ENCODE measurements at regions of chr19 and their contacts with region 1.

Region 1: DNA sequence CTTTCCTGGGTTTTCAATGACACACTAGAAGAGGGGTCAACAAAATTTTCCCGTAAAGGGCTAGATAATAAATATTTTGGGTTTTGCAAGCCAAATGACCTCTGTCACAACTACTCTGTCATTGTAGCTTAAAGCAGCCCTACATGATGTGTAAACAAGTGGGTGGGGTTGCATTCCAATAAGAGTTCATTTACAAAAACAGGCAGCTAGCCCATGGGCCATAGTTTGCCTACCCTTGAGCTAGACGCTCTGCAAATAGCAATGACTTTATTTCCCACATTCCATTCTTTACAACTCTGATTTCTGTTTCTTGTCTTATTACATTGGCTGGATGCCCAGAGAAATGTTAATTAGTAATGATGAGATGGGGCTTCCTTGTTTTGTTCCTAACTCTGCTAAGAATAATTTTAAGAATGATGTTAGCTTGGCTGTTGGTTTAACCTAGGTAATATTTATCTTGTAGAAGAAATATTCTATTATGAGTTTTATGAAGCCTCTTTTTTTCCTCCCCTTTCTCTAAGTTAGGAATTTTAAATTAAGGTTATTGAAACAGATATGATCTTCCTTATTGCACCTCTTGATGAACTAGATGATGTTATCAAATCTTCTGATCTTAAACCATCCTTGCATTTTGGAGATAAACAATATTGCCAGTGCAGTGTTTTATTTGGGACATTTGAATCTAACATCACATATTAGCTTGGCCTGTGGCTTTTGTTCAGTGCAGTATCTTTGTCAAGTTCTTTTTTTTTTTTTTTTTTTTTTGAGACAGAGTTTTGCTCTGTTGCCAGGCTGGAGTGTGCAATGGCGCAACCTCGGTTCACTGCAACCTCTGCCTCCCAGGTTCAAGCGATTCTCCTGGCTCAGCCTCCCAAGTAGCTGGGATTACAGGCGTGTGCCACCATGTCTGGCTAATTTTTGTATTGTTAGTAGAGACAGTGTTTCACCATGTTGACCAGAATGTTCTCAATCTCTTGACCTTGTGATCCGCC is 76.3 kb downstream of the ZNF557 start:
- DNase-seq: no peak
- ATAC-seq: no peak
- H3K4me3 ChIP-seq: no peak overlapping the region
- H3K4me3 Mint-ChIP-seq: no peak overlapping the region
- H3K27ac ChIP-seq: no peak overlapping the region
- H3K27ac Mint-ChIP-seq: no peak overlapping the region
- H3K4me1 ChIP-seq: no peaks in the 10 kb centered on the region
- H3K4me1 Mint-ChIP-seq: peaks cover 3% of the 10 kb centered on the region
- H3K27me3 ChIP-seq: no peaks in the 10 kb centered on the region
- H3K27me3 Mint-ChIP-seq: no peaks in the 10 kb centered on the region
- CTCF ChIP-seq: no peak

Region 2: DNA sequence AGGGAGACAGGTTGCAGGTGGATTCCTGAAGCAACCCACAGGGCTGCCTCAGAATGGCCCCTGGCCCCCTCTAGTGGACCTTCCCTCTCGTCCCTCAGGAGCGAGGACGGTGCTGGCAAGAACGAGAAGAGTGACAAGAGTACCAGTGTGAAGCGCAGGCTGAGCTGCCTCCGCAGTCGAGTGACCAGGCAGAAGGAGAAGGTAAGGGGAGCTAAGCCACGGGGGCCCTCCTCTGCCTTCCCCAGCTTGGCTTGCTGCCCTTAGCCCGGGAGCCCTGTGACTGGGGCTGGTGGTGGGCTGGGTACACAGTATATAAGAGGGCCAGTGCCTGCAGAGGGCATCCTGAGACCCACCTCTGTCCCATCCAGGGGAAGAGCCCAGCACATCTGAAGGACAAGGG is 236.9 kb after region 1 on chr19:
- CTCF ChIA-PET with region 1: interaction called, 3 read pairs
- POLR2A ChIA-PET with region 1: no interaction called
- intact Hi-C with region 1: loop called (anchors 1 to 5 kb)
- DNase-seq: no peak
- ATAC-seq: no peak
- H3K4me3 ChIP-seq: no peak overlapping the region
- H3K4me3 Mint-ChIP-seq: no peak overlapping the region
- H3K27ac ChIP-seq: no peak overlapping the region
- H3K27ac Mint-ChIP-seq: no peak overlapping the region
- H3K4me1 ChIP-seq: no peaks in the 10 kb centered on the region
- H3K4me1 Mint-ChIP-seq: peaks cover 19% of the 10 kb centered on the region
- H3K27me3 ChIP-seq: no peaks in the 10 kb centered on the region
- H3K27me3 Mint-ChIP-seq: no peaks in the 10 kb centered on the region
- CTCF ChIP-seq: no peak